PC-9 (cell line): ENCODE measurements at regions of chr14 and their contacts with region 1.

Region 1: DNA sequence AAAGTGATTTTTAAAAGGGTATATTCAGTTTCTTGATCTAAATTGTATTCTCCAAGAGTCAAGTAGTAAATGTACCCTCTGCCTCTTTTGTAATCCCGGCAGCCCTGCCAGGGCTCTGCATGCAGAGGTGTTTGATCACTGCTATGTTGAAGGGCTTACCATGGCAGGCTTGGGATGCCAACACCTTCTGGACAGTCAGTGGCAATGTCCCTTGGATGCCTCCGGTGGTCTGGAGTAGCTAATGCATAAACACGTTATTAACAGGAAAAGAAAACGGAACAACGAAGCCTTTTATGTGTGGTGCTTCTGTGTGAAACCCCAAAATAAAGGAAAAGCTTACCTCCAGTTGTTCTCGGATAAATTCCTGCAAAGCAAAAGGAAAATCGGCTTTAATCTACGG is 19.9 kb downstream of the EIF2B2 start:
- DNase-seq: peak in 1 of 2 experiments; percentile 56
- H3K4me3 ChIP-seq: no peak overlapping the region
- H3K27ac ChIP-seq: no peak overlapping the region
- H3K4me1 ChIP-seq: peaks cover 14% of the 10 kb centered on the region
- H3K27me3 ChIP-seq: no peaks in the 10 kb centered on the region
- CTCF ChIP-seq: peak; percentile 79

Region 2: DNA sequence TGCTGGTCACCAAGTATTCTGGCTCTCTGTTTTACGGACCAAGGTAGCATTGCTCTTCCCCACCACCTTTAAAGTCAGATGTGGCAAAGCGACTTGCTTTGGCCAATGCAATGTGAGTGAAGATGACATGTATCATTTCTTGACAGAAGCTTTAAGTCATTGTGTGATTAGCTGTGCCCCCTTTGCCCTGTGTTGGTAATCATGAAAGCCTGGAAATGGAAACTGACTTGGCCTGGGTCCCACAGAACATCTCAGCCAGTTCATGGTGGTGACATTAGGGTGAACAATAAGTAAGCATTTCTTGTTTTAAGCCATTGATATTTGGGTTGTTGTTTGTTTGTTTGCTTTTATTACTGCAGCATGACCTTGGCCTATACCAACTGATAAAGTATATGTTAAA is 275.4 kb before region 1 on chr14:
- CTCF ChIA-PET with region 1: no interaction called
- POLR2A ChIA-PET with region 1: no interaction called
- intact Hi-C with region 1: no loop called
- DNase-seq: no peak
- H3K4me3 ChIP-seq: no peak overlapping the region
- H3K27ac ChIP-seq: no peak overlapping the region
- H3K4me1 ChIP-seq: no peaks in the 10 kb centered on the region
- H3K27me3 ChIP-seq: no peaks in the 10 kb centered on the region
- CTCF ChIP-seq: no peak

Region 3: GRCh38 chr14:74973003-74973653 is 49.5 kb before region 1 on chr14:
- CTCF ChIA-PET with region 1: no interaction called
- POLR2A ChIA-PET with region 1: no interaction called
- intact Hi-C with region 1: no loop called
- DNase-seq: peak in 1 of 2 experiments; percentile 83
- H3K4me3 ChIP-seq: no peak overlapping the region
- H3K27ac ChIP-seq: no peak overlapping the region
- H3K4me1 ChIP-seq: peaks cover 8% of the 10 kb centered on the region; the same call in 1 of the 2 replicates
- H3K27me3 ChIP-seq: no peaks in the 10 kb centered on the region
- CTCF ChIP-seq: no peak

Region 4: DNA sequence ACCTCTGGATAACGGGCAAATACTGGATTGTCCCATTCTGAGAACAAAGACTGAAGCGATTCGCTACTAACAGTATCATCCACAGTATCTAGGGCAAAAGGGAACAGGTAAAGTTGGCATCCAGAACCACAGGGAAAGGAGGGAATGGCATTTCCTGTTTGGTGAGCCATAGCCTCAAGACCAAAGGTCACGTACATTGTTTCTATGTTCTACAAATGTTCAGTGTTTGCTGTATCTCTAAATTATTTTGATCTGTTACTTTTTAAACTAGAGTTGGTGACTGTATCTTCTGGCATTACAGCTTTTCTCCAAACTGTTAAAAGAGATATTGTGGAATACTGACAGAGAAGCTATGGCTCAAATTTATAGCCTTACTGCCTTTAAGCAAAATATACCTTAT is 19.0 kb after region 1 on chr14:
- CTCF ChIA-PET with region 1: no interaction called
- POLR2A ChIA-PET with region 1: interaction called, 7 read pairs
- intact Hi-C with region 1: loop called (anchors 2 kb)
- DNase-seq: peak; percentile 57 to 68
- H3K4me3 ChIP-seq: peak overlapping the region; percentile 0; the same call in 1 of the 2 replicates
- H3K27ac ChIP-seq: peak overlapping the region; percentile 39
- H3K4me1 ChIP-seq: peaks cover 38% of the 10 kb centered on the region
- H3K27me3 ChIP-seq: no peaks in the 10 kb centered on the region
- CTCF ChIP-seq: no peak

Region 5: GRCh38 chr14:75098682-75099081 is 76.0 kb after region 1 on chr14:
- CTCF ChIA-PET with region 1: no interaction called
- POLR2A ChIA-PET with region 1: no interaction called
- intact Hi-C with region 1: no loop called
- DNase-seq: no peak
- H3K4me3 ChIP-seq: no peak overlapping the region
- H3K27ac ChIP-seq: no peak overlapping the region
- H3K4me1 ChIP-seq: no peaks in the 10 kb centered on the region
- H3K27me3 ChIP-seq: no peaks in the 10 kb centered on the region
- CTCF ChIP-seq: no peak